Activated naive CD4-positive, alpha-beta T cell treated with anti-CD3 and anti-CD28 coated beads for 36 hours (primary cell): ENCODE measurements at regions of chr1 and their contacts with region 1.

Region 1: DNA sequence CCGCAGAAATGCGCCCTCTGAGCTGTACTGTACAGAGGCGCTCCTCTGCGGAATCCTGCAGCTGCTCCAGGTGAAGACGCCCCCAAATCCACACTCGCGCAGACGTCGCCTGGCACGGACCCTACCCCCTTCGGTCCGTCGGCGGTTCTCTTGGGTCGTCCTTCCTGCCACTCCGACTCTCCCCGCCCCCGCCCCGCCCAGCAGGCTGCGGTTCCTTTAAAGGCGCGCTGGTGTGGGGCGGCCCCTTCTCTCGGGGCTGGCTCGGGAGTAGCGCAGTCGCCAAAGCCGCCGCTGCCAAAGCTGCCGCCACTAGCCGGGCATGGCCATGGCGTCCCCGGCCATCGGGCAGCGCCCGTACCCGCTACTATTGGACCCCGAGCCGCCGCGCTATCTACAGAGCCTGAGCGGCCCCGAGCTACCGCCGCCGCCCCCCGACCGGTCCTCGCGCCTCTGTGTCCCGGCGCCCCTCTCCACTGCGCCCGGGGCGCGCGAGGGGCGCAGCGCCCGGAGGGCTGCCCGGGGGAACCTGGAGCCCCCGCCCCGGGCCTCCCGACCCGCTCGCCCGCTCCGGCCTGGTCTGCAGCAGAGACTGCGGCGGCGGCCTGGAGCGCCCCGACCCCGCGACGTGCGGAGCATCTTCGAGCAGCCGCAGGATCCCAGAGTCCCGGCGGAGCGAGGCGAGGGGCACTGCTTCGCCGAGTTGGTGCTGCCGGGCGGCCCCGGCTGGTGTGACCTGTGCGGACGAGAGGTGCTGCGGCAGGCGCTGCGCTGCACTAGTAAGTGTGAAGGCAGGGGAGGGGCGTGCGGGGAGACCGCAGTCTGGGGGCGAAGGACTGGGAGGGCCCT is at the start of gene RASSF5:
- DNase-seq: peak; percentile 92
- H3K4me3 Mint-ChIP-seq: peak within 1 kb of the TSS; percentile 74
- H3K27ac Mint-ChIP-seq: peak within 1 kb of the TSS; percentile 55
- H3K4me1 Mint-ChIP-seq: peaks cover 45% of the 10 kb centered on the region
- H3K27me3 Mint-ChIP-seq: peaks cover 22% of the 10 kb centered on the region
- total RNA-seq, gene RASSF5: 257 to 258 TPM

Region 2: GRCh38 chr1:205998457-205999241 is 508.9 kb before region 1 on chr1:
- CTCF ChIA-PET with region 1: no interaction called
- intact Hi-C with region 1: no loop called
- DNase-seq: no peak
- H3K4me3 Mint-ChIP-seq: no peak overlapping the region
- H3K27ac Mint-ChIP-seq: no peak overlapping the region
- H3K4me1 Mint-ChIP-seq: peaks cover 15% of the 10 kb centered on the region
- H3K27me3 Mint-ChIP-seq: no peaks in the 10 kb centered on the region

Region 3: DNA sequence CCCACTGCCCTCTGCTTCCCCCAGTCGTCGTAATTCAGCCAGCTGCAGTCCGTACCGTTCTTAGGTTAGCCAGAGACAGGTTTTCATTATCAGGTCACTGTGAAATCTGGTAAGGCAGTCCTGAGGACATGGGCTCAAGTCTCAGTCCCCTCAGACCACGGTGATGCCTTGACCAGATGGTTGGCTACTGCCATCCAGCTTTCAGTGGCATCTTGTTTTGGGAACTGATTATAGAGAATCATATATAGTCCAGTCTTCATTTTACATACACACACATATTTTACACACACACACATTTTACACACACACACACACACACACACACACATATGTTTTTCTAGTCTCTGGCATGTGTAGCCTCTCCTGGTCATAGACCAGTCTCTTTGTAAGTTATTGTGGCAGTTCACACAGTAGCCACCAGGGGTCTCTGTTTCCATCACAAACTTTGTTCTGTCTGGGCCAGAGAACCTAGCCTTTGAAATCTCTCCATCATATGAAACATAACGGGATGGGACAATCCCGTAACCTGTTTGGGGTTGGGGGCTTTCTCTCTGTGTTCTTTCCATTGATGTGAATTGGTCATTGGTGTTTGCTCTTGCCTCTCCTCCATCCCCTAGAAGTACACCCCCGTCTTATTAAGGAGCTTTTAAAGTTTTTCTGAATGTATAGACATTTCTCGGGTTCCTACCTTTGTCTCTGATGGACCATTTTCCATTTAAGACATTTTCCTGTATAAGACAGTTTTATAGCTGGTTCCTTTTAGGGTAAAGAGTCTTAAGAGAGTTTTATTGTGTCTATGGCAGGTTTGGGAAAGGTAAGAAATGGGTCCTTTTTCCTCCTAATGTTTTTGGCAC is 45.7 kb before region 1 on chr1:
- CTCF ChIA-PET with region 1: interaction called, 5 read pairs
- intact Hi-C with region 1: loop called (anchors 2 kb)
- DNase-seq: peak; percentile 92
- H3K4me3 Mint-ChIP-seq: no peak overlapping the region
- H3K27ac Mint-ChIP-seq: no peak overlapping the region
- H3K4me1 Mint-ChIP-seq: peaks cover 46% of the 10 kb centered on the region
- H3K27me3 Mint-ChIP-seq: no peaks in the 10 kb centered on the region

Region 4: DNA sequence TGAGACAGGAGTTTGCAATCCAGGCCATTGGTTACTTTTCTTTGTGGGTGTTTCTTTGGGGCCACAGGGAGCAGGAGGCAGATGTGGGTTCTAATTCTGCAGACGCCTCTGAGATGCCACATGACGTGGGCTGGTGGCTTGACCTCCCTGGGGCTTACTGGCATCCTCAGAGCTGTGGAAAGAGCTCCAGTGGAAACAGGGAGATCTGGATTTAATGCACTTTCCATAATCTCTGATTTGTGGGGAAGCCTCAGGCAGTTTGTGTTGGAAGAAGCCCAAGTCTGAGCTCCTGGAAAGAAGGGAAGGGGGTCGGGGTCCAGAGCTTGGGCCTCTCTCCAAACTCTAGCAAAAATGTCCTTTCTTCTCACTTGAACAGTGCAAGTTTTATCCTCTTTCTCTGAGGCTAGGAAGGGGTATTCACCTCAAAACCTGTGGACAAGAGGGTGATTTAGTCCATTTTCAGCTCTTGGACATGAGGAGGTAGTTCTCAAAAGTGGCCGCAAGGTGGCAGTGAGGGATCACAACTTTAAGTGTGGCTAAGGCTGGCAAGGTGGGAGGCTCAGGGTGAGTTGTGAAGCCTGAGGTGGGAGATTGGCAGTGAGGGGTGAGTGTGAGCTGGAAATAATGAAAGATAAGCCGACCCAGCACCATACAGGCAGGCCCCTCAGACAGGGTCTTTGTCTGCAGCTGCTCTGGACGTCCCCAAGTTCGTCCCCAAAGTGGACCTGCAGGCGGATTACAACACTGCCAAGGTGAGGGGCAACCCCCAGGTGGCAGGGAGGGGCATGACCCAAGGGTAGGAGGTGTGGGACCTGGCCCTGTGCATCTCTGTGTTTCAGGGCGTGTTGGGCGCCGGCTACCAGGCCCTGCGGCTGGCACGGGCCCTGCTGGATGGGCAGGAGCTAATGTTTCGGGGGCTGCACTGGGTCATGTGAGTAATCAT is 28.1 kb before region 1 on chr1:
- CTCF ChIA-PET with region 1: interaction called, 10 read pairs
- intact Hi-C with region 1: loop called (anchors 2 kb)
- DNase-seq: peak; percentile 85
- H3K4me3 Mint-ChIP-seq: no peak overlapping the region
- H3K27ac Mint-ChIP-seq: peak overlapping the region; percentile 67
- H3K4me1 Mint-ChIP-seq: peaks cover 35% of the 10 kb centered on the region
- H3K27me3 Mint-ChIP-seq: no peaks in the 10 kb centered on the region

Region 5: DNA sequence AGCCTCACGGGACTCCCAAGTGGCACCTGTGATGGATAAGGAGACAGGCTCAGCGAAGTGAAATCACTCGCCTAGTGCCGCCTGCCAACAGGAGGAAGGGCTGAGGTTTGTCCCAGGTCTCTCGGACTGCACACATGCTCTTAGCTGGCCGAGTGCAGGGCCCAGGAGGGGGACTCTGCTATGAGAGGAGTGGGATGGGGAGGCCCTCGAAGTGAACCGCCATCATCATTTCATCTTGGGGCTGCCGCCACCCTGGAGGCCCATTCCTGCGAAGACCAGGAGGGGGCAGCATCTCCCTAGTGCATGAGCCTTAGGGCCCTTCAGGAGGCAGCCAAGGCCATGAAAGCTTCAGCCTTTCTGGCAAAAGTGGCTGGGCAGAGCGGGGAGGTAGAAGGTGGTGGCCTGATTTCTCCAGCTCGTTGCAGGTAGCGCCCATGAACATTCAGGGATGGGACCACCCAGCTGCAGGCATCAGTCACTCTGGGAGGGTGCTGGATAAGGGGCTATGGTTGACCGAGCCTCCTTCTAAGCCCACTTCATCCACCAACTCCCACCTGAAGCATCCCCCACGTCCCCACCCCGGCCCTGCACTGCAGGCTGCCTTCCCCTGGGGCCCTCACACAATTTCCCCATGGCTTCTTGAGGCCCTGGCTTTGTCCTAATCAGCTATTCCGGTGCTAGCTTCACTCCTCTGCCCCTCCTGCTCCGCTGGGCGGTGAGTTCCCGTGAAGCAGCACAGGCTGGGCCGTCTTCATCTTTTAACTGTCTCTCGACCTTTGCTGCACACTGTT is 17.3 kb before region 1 on chr1:
- CTCF ChIA-PET with region 1: interaction called, 9 read pairs
- intact Hi-C with region 1: loop called (anchors 2 kb)
- DNase-seq: peak; percentile 87
- H3K4me3 Mint-ChIP-seq: no peak overlapping the region
- H3K27ac Mint-ChIP-seq: no peak overlapping the region
- H3K4me1 Mint-ChIP-seq: no peaks in the 10 kb centered on the region
- H3K27me3 Mint-ChIP-seq: no peaks in the 10 kb centered on the region

Region 6: GRCh38 chr1:206556750-206557635 is 49.5 kb after region 1 on chr1:
- CTCF ChIA-PET with region 1: interaction called, 3 read pairs
- intact Hi-C with region 1: loop called (anchors 2 kb)
- DNase-seq: peak; percentile 92
- H3K4me3 Mint-ChIP-seq: peak overlapping the region; percentile 96
- H3K27ac Mint-ChIP-seq: peak overlapping the region; percentile 100
- H3K4me1 Mint-ChIP-seq: peaks cover 61% of the 10 kb centered on the region
- H3K27me3 Mint-ChIP-seq: no peaks in the 10 kb centered on the region